CD14-positive monocyte (primary cell): ENCODE measurements at regions of chr2 and their contacts with region 1.

Region 1: GRCh38 chr2:85538486-85539360 is at the start of gene MAT2A:
- DNase-seq: peak; percentile 83 to 88 (median 88)
- H3K4me3 ChIP-seq: peak within 1 kb of the TSS; percentile 68 to 99 (median 95)
- H3K4me3 Mint-ChIP-seq: peak within 1 kb of the TSS; percentile 91 to 95
- H3K27ac ChIP-seq: peak within 1 kb of the TSS; percentile 88 to 98
- H3K27ac Mint-ChIP-seq: peak within 1 kb of the TSS; percentile 95 to 98 (median 97)
- H3K4me1 ChIP-seq: peaks cover 35 to 64% of the 10 kb centered on the region in 2 donors
- H3K4me1 Mint-ChIP-seq: peaks cover 57% of the 10 kb centered on the region
- H3K27me3 ChIP-seq: no peaks in the 10 kb centered on the region
- H3K27me3 Mint-ChIP-seq: no peaks in the 10 kb centered on the region
- CTCF ChIP-seq: peak; percentile 62
- polyA plus RNA-seq, gene MAT2A: 97.0 to 454 (median 117) TPM

Region 2: DNA sequence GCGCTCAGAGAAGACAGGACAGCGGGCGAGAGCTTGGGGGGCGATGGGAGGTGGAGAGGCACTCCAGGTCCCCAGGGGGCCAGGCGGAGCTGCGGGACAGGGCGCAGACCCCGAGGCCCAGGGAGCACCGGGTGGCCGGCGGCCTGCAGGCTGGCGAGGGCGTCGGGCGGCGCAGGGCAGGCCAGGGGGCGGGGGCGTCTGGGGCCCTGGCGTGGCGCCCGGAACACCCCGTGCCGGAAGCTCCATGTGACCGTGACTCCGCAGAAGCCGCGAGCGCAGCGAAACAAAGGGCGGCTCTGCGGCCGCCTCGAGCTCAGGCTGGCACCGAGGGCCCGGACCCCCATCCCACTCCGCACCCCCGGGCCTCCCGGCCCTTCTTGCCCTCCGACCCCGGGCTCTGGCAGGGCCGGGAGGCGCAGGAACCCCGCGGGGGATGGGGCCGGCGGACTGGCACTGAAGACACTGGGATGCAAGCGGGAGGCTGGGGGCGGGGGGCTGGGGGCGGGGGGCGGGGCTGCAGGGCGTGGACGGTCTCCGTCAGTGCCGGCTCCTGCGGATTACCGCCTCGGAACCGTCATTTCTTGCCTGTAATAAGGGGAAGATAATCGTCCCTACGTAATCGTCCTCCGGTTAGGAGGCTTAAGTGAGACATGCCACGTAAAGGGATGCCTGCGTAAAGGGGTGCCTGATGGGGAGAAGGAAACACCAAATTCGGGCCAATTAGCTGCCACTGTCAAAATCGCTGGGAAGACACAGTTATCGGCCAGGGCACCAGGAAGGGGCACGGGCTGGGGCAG is 101.0 kb before region 1 on chr2:
- intact Hi-C with region 1: loop called (anchors 5 kb)
- DNase-seq: peak; percentile 96
- H3K4me3 ChIP-seq: peak overlapping the region in 2 of 3 experiments; percentile 12 to 38
- H3K4me3 Mint-ChIP-seq: peak overlapping the region; percentile 68 to 76
- H3K27ac ChIP-seq: peak overlapping the region; percentile 92 to 98
- H3K27ac Mint-ChIP-seq: peak overlapping the region; percentile 98 to 100 (median 99)
- H3K4me1 ChIP-seq: peaks cover 57 to 66% of the 10 kb centered on the region in 2 donors
- H3K4me1 Mint-ChIP-seq: peaks cover 59% of the 10 kb centered on the region
- H3K27me3 ChIP-seq: no peaks in the 10 kb centered on the region
- H3K27me3 Mint-ChIP-seq: peaks cover 0 to 7% (median 2%) of the 10 kb centered on the region in 3 donors
- CTCF ChIP-seq: no peak

Region 3: GRCh38 chr2:85504778-85505323 is 33.9 kb before region 1 on chr2:
- intact Hi-C with region 1: loop called in 1 of 2 experiments (anchors 1 kb)
- DNase-seq: peak in 2 of 3 donors; percentile 21 to 56
- H3K4me3 ChIP-seq: no peak overlapping the region
- H3K4me3 Mint-ChIP-seq: no peak overlapping the region
- H3K27ac ChIP-seq: no peak overlapping the region
- H3K27ac Mint-ChIP-seq: peak overlapping the region in 1 of 7 donors; percentile 23
- H3K4me1 ChIP-seq: peaks cover 26 to 53% of the 10 kb centered on the region in 2 donors
- H3K4me1 Mint-ChIP-seq: peaks cover 52% of the 10 kb centered on the region
- H3K27me3 ChIP-seq: no peaks in the 10 kb centered on the region
- H3K27me3 Mint-ChIP-seq: peaks cover 0 to 5% (median 1%) of the 10 kb centered on the region in 3 donors
- CTCF ChIP-seq: no peak